ENCODE measurements at regions of chr10 and their contacts with region 1.

Region 1: GRCh38 chr10:20922451-20922850 is 25.3 kb upstream of the NEBL start:
- DNase-seq: no peak
- H3K4me3 ChIP-seq: no peak overlapping the region
- H3K27ac ChIP-seq: no peak overlapping the region
- H3K4me1 ChIP-seq: no peaks in the 10 kb centered on the region
- H3K27me3 ChIP-seq: no peaks in the 10 kb centered on the region
- CTCF ChIP-seq: no peak
- POLR2A ChIP-seq: no peak

Region 2: GRCh38 chr10:19385846-19386465 is 1536.5 kb before region 1 on chr10:
- intact Hi-C with region 1: no loop called
- DNase-seq: no peak
- H3K4me3 ChIP-seq: no peak overlapping the region
- H3K27ac ChIP-seq: no peak overlapping the region
- H3K4me1 ChIP-seq: no peaks in the 10 kb centered on the region
- H3K27me3 ChIP-seq: no peaks in the 10 kb centered on the region
- CTCF ChIP-seq: no peak
- POLR2A ChIP-seq: no peak

Region 3: GRCh38 chr10:20443094-20443493 is 479.4 kb before region 1 on chr10:
- intact Hi-C with region 1: loop called (anchors 10 kb)
- DNase-seq: no peak
- H3K4me3 ChIP-seq: no peak overlapping the region
- H3K27ac ChIP-seq: no peak overlapping the region
- H3K4me1 ChIP-seq: no peaks in the 10 kb centered on the region
- H3K27me3 ChIP-seq: no peaks in the 10 kb centered on the region
- CTCF ChIP-seq: no peak
- POLR2A ChIP-seq: no peak

Region 4: GRCh38 chr10:20852303-20852702 is 70.1 kb before region 1 on chr10:
- intact Hi-C with region 1: no loop called
- DNase-seq: no peak
- H3K4me3 ChIP-seq: no peak overlapping the region
- H3K27ac ChIP-seq: no peak overlapping the region
- H3K4me1 ChIP-seq: no peaks in the 10 kb centered on the region
- H3K27me3 ChIP-seq: no peaks in the 10 kb centered on the region
- CTCF ChIP-seq: no peak
- POLR2A ChIP-seq: no peak

Region 5: GRCh38 chr10:21860718-21861117 is 938.3 kb after region 1 on chr10:
- intact Hi-C with region 1: no loop called
- DNase-seq: no peak
- H3K4me3 ChIP-seq: no peak overlapping the region
- H3K27ac ChIP-seq: no peak overlapping the region
- H3K4me1 ChIP-seq: no peaks in the 10 kb centered on the region
- H3K27me3 ChIP-seq: no peaks in the 10 kb centered on the region
- CTCF ChIP-seq: no peak
- POLR2A ChIP-seq: no peak